Heart left ventricle (tissue), 16 donors: ENCODE measurements at regions of chr1 and their contacts with region 1.

Region 1: DNA sequence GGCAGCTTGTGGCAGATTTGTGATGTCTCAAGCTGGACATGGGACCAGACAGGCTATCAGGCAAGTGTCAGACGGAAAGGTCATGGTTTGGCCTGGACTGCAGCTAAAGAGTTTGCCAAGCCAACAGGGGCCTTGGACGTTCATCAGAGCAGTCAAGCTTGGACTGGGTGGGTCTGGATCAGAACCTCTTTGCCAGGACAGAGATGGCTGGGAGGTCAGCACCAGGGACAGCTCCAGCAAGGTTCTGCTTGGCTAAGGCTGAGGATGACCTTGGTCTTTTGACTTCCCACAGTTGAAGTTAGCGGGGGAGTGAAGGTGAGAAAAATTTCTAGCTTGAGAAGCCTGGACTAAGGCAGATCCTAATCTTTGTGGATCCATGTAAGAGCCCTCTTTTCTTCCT is 68.1 kb downstream of the GRIK3 start:
- DNase-seq: no peak
- ATAC-seq: peak in 1 of 4 donors; percentile 39
- H3K4me3 ChIP-seq: no peak overlapping the region
- H3K27ac ChIP-seq: no peak overlapping the region
- H3K4me1 ChIP-seq: no peaks in the 10 kb centered on the region
- H3K27me3 ChIP-seq: peaks cover 0 to 11% (median 0%) of the 10 kb centered on the region in 9 donors
- CTCF ChIP-seq: no peak
- POLR2A ChIP-seq: no peak

Region 2: DNA sequence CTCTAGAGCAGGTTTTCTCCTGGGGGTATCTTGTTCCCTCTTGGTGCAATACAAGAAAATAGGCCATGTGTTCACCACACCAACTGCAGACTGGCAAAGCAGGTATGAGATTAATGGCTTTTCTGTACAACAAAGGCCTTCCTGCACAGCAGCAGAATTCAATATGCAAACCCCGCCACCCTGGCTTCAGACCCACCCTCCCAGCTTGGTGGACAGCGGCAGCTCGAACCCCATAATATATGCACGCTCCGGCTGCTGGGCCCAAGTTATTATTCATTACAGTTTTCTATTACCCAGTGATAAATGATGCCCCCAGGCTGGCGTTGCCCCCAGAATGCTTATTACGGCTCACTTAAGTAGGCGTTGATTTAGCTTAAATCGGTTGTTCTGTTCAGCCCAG is 1749.2 kb after region 1 on chr1:
- intact Hi-C with region 1: loop called in 1 of 10 experiments (anchors 10 kb)
- DNase-seq: no peak
- ATAC-seq: no peak
- H3K4me3 ChIP-seq: no peak overlapping the region
- H3K27ac ChIP-seq: no peak overlapping the region
- H3K4me1 ChIP-seq: no peaks in the 10 kb centered on the region
- H3K27me3 ChIP-seq: peaks cover 0 to 3% (median 0%) of the 10 kb centered on the region in 9 donors
- CTCF ChIP-seq: no peak
- POLR2A ChIP-seq: no peak